ENCODE measurements at regions of chr10 and their contacts with region 1.

Region 1: DNA sequence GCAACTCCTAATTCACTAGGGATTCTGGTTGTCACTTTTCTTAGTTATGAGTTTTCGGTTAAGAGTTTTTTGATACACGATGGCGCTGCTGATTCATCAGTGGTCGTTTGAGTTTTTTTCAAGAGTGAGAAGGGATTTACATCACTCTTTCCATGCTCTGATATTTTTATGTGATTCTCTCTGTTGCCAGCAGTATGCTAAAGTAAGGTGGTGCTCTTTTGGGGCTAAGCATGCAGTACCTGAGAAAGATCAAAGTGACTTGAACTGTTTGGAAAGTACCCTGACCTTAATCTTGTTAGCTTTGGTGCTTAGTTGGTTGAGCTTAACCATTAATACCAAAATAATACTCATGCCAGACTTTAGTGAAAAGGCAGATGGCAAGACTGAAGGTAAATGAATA is 28.1 kb downstream of the STAMBPL1 start:
- DNase-seq: no peak
- ATAC-seq: peak; percentile 48; the same call in 2 of the 3 replicates
- H3K4me3 ChIP-seq: no peak overlapping the region
- H3K27ac ChIP-seq: no peak overlapping the region
- H3K4me1 ChIP-seq: no peaks in the 10 kb centered on the region
- H3K27me3 ChIP-seq: no peaks in the 10 kb centered on the region
- CTCF ChIP-seq: no peak
- EP300 ChIP-seq: no peak
- POLR2A ChIP-seq: no peak
- RAD21 ChIP-seq: no peak

Region 2: GRCh38 chr10:88804083-88804812 is 103.9 kb before region 1 on chr10:
- CTCF ChIA-PET with region 1: no interaction called
- POLR2A ChIA-PET with region 1: interaction called, 10 read pairs
- RAD21 ChIA-PET with region 1: no interaction called
- SMC1A ChIA-PET with region 1: no interaction called
- in situ Hi-C with region 1: no loop called
- intact Hi-C with region 1: no loop called
- DNase-seq: no peak
- ATAC-seq: no peak
- H3K4me3 ChIP-seq: no peak overlapping the region
- H3K27ac ChIP-seq: no peak overlapping the region
- H3K4me1 ChIP-seq: no peaks in the 10 kb centered on the region
- H3K27me3 ChIP-seq: no peaks in the 10 kb centered on the region
- CTCF ChIP-seq: no peak
- EP300 ChIP-seq: no peak
- POLR2A ChIP-seq: no peak
- RAD21 ChIP-seq: no peak

Region 3: GRCh38 chr10:88819290-88819689 is 88.9 kb before region 1 on chr10:
- CTCF ChIA-PET with region 1: no interaction called
- POLR2A ChIA-PET with region 1: no interaction called
- RAD21 ChIA-PET with region 1: no interaction called
- SMC1A ChIA-PET with region 1: no interaction called
- in situ Hi-C with region 1: no loop called
- intact Hi-C with region 1: no loop called
- DNase-seq: no peak
- ATAC-seq: no peak
- H3K4me3 ChIP-seq: no peak overlapping the region
- H3K27ac ChIP-seq: no peak overlapping the region
- H3K4me1 ChIP-seq: no peaks in the 10 kb centered on the region
- H3K27me3 ChIP-seq: 0 out of 4 replicates have a peak, but pooled peaks cover 0 to 2% of the 10 kb centered on the region in 2 experiments
- CTCF ChIP-seq: no peak
- EP300 ChIP-seq: no peak
- POLR2A ChIP-seq: no peak
- RAD21 ChIP-seq: no peak

Region 4: DNA sequence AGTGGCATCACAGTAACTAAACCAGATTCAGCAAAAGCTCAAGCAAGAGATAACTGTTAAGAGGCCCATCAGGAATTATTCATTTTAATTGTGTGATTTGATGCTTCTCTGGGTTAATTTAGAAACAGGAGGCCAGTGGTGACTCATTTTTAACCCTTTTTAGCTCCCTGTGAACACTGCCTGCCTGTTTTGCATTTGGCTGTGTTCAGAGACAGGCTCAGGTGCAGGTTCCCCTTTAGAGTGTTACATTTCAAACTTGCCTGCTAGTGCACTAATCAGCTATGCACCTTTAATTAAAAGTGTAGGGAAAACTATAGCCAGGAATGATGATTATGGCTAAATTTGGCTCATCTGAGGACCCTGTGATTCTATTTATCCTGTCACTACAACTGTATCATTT is 21.6 kb before region 1 on chr10:
- CTCF ChIA-PET with region 1: interaction called, 7 read pairs
- POLR2A ChIA-PET with region 1: interaction called, 4 read pairs
- RAD21 ChIA-PET with region 1: interaction called, 249 read pairs
- SMC1A ChIA-PET with region 1: interaction called, 329 read pairs
- in situ Hi-C with region 1: no loop called
- intact Hi-C with region 1: no loop called
- DNase-seq: no peak
- ATAC-seq: peak; percentile 76
- H3K4me3 ChIP-seq: peak overlapping the region; percentile 55
- H3K27ac ChIP-seq: peak overlapping the region; percentile 61
- H3K4me1 ChIP-seq: peaks cover 46% of the 10 kb centered on the region
- H3K27me3 ChIP-seq: no peaks in the 10 kb centered on the region
- CTCF ChIP-seq: no peak
- EP300 ChIP-seq: no peak
- POLR2A ChIP-seq: 0 out of 2 replicates have a peak, but pooled peaks have one; percentile 26
- RAD21 ChIP-seq: no peak

Region 5: GRCh38 chr10:88892222-88892967 is 15.8 kb before region 1 on chr10:
- CTCF ChIA-PET with region 1: interaction called, 5 read pairs
- POLR2A ChIA-PET with region 1: interaction called, 4 read pairs
- RAD21 ChIA-PET with region 1: interaction called, 249 read pairs
- SMC1A ChIA-PET with region 1: interaction called, 329 read pairs
- in situ Hi-C with region 1: no loop called
- intact Hi-C with region 1: no loop called
- DNase-seq: no peak
- ATAC-seq: no peak
- H3K4me3 ChIP-seq: no peak overlapping the region
- H3K27ac ChIP-seq: no peak overlapping the region
- H3K4me1 ChIP-seq: peaks cover 44% of the 10 kb centered on the region
- H3K27me3 ChIP-seq: no peaks in the 10 kb centered on the region
- CTCF ChIP-seq: no peak
- EP300 ChIP-seq: no peak
- POLR2A ChIP-seq: no peak
- RAD21 ChIP-seq: no peak